ENCODE measurements at regions of chr20 and their contacts with region 1.

Region 1: DNA sequence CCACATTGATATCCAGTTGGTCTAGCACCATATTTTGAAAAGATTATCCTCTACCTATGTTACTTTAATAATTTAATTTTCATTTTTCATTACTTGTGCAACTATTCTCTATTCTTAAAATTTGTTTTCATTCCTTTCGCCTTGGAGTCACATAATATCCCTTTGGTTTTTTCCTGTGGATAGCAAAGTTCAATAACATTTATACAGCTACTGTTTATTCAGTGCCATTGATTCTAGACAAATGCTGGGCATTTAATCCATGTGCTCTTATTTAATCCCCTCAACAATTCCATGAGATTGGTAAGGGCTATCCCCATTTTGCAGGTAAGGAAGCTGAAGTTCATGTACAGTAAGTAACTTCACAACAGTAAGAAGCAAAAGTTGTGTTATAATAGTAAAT is 32.6 kb downstream of the PSMF1 start:
- DNase-seq: no peak
- H3K4me3 Mint-ChIP-seq: no peak overlapping the region
- H3K27ac Mint-ChIP-seq: no peak overlapping the region
- H3K4me1 Mint-ChIP-seq: peaks cover 10% of the 10 kb centered on the region
- H3K27me3 Mint-ChIP-seq: no peaks in the 10 kb centered on the region

Region 2: DNA sequence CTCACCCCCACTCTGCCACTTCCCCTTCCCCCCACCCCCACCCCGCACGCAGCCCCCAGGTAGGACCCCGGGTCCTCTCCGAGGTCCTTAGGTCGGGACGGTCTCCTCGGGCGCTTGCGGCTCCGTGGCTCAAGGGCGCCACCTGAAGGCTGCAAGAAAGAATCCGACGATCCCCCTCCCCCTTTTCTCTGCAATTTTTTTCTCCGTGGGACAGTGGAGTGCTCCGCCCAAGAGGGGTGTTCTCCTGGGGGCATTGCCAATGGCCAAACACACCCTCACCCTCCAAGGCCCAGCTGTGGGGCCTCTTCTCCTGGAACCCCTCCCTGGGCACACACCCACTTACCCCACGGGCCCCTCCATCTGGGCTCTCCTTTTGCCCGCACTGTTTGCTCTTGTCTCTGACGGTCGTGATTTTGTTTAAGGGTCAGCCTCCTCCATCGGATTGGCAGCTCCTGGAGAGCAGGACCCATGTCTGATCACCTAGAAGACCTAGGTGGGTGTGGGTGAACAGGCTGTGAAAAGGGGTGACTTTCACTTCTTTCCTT is 34.9 kb after region 1 on chr20:
- CTCF ChIA-PET with region 1: no interaction called
- POLR2A ChIA-PET with region 1: no interaction called
- intact Hi-C with region 1: loop called (anchors 1 kb)
- DNase-seq: peak; percentile 72
- H3K4me3 Mint-ChIP-seq: peak overlapping the region; percentile 23
- H3K27ac Mint-ChIP-seq: no peak overlapping the region
- H3K4me1 Mint-ChIP-seq: peaks cover 7% of the 10 kb centered on the region
- H3K27me3 Mint-ChIP-seq: peaks cover 24% of the 10 kb centered on the region